Activated naive CD4-positive, alpha-beta T cell treated with anti-CD3 and anti-CD28 coated beads, Interleukin-2, amount 10 ng/mL, durations not matched to agents 7 days and 5 days (primary cell): ENCODE measurements at regions of chr6 and their contacts with region 1.

Region 1: DNA sequence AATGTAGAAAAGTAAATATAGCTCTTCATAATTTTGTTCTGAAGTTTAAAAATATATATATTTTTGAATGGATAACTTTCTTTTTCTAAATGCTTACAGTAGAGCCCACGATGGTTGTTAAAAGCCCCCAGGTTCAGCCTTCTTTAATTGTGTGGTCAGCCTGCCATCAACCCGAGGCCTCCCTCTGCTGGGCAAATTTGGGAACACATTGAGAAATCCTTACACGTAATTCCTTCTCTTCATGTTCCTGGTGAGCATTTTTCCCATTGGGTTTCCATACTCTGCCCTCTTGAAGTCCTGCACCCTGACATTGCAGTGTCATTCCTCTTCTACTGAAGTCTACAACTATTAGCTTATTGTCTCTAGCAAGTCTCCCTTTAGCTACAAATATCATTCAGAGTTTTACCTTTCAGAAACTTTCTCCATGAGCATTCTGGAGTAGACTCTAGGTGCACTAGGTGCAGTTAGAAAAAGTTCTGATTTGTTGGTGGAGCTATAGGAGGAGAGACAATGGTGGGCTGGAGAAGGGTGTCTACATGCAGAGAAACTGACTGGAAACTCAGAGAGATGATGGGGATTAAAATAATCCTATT is 40.6 kb downstream of the TRIM38 start:
- DNase-seq: peak; percentile 65
- H3K4me3 Mint-ChIP-seq: no peak overlapping the region
- H3K27ac Mint-ChIP-seq: no peak overlapping the region
- H3K4me1 Mint-ChIP-seq: peaks cover 9% of the 10 kb centered on the region
- H3K27me3 Mint-ChIP-seq: no peaks in the 10 kb centered on the region

Region 2: DNA sequence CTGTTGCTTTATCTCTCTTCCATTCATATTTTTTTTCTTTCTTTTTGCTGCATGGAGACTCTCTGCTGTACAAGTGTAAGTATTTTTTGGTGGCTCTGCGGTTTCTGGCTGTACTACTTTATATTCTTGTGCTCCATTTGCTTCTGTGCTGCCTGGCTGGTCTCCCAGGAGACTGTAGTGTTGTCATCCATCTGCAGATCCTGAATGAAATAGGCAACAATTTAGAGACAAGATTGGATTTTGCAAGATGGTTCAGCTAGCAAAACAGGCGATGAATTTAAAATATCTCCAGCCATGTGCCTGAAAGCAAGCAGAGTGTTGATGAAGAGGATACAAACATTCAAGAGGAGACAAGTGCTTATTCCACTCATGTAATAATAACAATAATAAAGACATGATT is 426.3 kb before region 1 on chr6:
- CTCF ChIA-PET with region 1: no interaction called
- DNase-seq: no peak
- H3K4me3 Mint-ChIP-seq: no peak overlapping the region
- H3K27ac Mint-ChIP-seq: no peak overlapping the region
- H3K4me1 Mint-ChIP-seq: peaks cover 11% of the 10 kb centered on the region
- H3K27me3 Mint-ChIP-seq: peaks cover 4% of the 10 kb centered on the region

Region 3: GRCh38 chr6:25717866-25718740 is 285.1 kb before region 1 on chr6:
- CTCF ChIA-PET with region 1: interaction called, 24 read pairs
- DNase-seq: no peak
- H3K4me3 Mint-ChIP-seq: no peak overlapping the region
- H3K27ac Mint-ChIP-seq: no peak overlapping the region
- H3K4me1 Mint-ChIP-seq: no peaks in the 10 kb centered on the region
- H3K27me3 Mint-ChIP-seq: peaks cover 14% of the 10 kb centered on the region

Region 4: GRCh38 chr6:25788305-25788922 is 214.8 kb before region 1 on chr6:
- CTCF ChIA-PET with region 1: interaction called, 10 read pairs
- DNase-seq: peak; percentile 63
- H3K4me3 Mint-ChIP-seq: no peak overlapping the region
- H3K27ac Mint-ChIP-seq: no peak overlapping the region
- H3K4me1 Mint-ChIP-seq: no peaks in the 10 kb centered on the region
- H3K27me3 Mint-ChIP-seq: peaks cover 5% of the 10 kb centered on the region

Region 5: GRCh38 chr6:25975923-25976560 is 27.2 kb before region 1 on chr6:
- CTCF ChIA-PET with region 1: interaction called, 13 read pairs
- DNase-seq: no peak
- H3K4me3 Mint-ChIP-seq: no peak overlapping the region
- H3K27ac Mint-ChIP-seq: no peak overlapping the region
- H3K4me1 Mint-ChIP-seq: peaks cover 4% of the 10 kb centered on the region
- H3K27me3 Mint-ChIP-seq: no peaks in the 10 kb centered on the region

Region 6: GRCh38 chr6:26017632-26017966 is 14.4 kb after region 1 on chr6:
- CTCF ChIA-PET with region 1: interaction called, 24 read pairs
- DNase-seq: peak; percentile 84
- H3K4me3 Mint-ChIP-seq: peak overlapping the region; percentile 66
- H3K27ac Mint-ChIP-seq: peak overlapping the region; percentile 95
- H3K4me1 Mint-ChIP-seq: peaks cover 43% of the 10 kb centered on the region
- H3K27me3 Mint-ChIP-seq: no peaks in the 10 kb centered on the region